ENCODE measurements at regions of chr10 and their contacts with region 1.

Region 1: DNA sequence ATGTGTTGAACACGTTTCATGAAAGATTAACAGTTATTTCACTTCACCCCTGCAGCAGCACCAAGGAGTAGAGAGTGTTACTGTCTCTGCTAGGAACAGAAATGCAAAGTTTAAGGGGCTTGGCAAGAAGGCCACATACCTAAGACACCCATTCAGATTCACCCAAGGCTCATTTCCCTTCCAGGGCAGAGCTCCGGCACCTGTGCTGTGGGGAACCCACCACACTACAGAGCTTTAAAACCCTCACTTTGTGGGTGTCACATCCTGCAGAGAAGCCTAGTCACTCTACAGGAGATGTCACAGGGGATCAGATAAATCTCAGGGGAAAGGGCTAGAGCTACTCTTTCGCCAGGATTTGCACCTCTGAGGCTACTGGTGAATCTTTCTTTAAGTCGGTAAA is 176.1 kb upstream of the KLF6 start:
- DNase-seq: peak; percentile 67
- ATAC-seq: peak; percentile 97
- H3K4me3 Mint-ChIP-seq: peak overlapping the region; percentile 85
- H3K27ac Mint-ChIP-seq: peak overlapping the region; percentile 93
- H3K4me1 Mint-ChIP-seq: peaks cover 57% of the 10 kb centered on the region
- H3K27me3 Mint-ChIP-seq: no peaks in the 10 kb centered on the region

Region 2: DNA sequence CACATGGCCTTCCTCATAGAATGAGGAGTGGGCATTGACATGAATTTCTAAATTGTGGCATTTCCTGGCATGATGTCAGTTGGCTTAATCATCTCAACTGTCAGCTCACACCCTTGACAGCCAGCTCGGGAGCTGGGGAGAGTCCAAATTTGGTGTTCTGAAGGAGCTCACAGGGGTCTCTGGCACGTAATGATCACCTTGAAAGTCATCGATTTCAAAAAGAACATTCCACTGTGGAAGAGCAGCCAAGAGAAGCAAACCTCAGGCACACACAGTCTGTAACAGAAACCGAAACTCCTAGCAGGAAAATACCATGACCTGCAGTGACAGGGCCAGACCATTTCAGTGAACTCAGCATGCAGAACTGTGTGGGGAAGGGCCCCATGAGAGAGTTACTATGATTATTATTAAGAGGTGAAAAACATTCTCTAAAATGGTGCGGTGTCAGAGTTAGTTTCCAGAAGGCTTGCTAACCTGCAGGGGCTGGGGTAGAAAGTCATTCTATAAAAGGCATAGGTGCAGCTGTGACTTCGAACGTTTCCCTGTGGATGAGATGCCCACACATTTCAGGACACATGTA is 149.7 kb before region 1 on chr10:
- POLR2A ChIA-PET with region 1: interaction called, 110 read pairs
- DNase-seq: no peak
- ATAC-seq: peak; percentile 41
- H3K4me3 Mint-ChIP-seq: peak overlapping the region; percentile 81
- H3K27ac Mint-ChIP-seq: peak overlapping the region; percentile 97
- H3K4me1 Mint-ChIP-seq: peaks cover 75% of the 10 kb centered on the region
- H3K27me3 Mint-ChIP-seq: no peaks in the 10 kb centered on the region

Region 3: DNA sequence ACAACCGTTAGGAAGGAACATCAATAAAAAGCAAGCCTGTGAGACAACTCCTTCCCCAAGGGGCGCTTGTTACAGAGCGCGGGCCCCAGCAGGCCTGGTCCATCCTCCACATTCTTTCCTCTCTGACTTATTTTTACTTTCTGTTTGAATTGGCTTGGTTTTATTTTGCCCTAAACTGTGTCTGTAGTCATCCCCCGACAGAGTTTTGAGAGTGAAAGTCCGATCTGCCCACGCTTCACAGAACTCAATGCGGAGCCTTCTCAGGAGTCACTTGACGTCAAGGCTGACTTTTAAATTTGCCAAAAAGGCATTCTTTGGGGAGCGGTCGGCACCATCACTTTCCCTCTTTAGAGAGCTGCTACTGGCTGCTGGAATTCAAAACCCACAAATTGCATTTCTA is 25.9 kb before region 1 on chr10:
- POLR2A ChIA-PET with region 1: interaction called, 12 read pairs
- DNase-seq: no peak
- ATAC-seq: peak; percentile 89
- H3K4me3 Mint-ChIP-seq: peak overlapping the region; percentile 76
- H3K27ac Mint-ChIP-seq: peak overlapping the region; percentile 98
- H3K4me1 Mint-ChIP-seq: peaks cover 50% of the 10 kb centered on the region
- H3K27me3 Mint-ChIP-seq: no peaks in the 10 kb centered on the region

Region 4: DNA sequence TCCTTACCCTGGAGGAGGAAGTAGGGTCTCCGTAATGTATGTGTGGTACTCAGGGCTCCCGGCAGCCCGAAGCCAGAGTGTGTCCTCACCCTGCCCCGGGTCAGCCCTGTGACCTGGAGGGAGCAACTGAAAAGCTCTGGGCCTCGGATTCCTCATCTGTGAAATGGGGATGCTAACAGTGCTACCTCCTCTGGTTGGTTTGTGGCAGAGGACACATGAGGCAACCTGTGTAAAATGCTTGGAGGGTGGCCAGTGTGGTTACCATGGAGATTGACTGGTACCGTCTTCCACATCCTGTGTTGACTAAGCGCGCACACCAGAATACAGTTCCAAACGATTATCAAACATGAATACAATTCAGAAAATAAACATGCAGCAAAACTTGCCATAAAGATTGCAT is 12.2 kb before region 1 on chr10:
- POLR2A ChIA-PET with region 1: interaction called, 164 read pairs
- DNase-seq: peak; percentile 62
- ATAC-seq: peak; percentile 78
- H3K4me3 Mint-ChIP-seq: peak overlapping the region; percentile 79
- H3K27ac Mint-ChIP-seq: peak overlapping the region; percentile 88
- H3K4me1 Mint-ChIP-seq: peaks cover 75% of the 10 kb centered on the region
- H3K27me3 Mint-ChIP-seq: no peaks in the 10 kb centered on the region

Region 5: DNA sequence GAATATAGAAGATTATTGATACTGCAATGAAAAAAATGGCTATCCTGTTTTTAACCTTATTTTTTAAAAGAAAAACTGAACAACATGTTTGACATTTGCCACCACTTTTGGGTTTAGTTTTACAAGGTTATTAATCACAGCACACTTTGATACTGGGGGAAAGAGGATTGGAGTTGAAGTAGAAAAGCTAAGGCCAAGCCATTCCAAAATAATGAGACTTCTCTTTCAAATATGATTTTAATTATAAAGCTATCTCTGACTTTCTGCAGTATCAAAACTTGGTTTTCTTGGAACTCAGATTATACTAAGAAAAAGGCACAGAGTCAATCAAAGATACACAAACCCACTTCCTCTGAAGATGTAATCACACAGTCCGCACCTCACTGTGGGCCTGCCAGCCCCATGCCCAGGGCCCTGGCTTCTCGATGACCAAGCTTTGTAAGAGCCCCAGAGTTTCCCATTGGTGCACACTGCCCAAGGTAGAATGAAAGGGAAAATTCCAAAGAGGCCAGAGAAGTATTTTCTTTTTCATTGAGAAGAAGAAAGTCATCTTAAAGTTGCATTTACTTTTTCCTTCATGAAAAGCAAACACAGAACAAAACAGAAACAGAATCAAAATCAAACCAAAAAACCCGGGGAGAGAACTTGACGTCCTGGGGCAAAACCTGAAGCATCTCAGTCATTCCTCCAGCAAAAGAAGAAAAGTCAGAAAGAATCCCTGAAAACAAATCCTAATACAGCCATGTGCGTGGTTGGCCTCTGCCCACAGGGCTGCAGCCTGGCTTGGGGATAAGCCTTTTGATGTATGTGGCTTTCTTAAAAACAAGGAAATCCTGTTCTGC is 11.6 kb after region 1 on chr10:
- POLR2A ChIA-PET with region 1: interaction called, 114 read pairs
- DNase-seq: no peak
- ATAC-seq: peak; percentile 89
- H3K4me3 Mint-ChIP-seq: peak overlapping the region; percentile 82
- H3K27ac Mint-ChIP-seq: peak overlapping the region; percentile 96
- H3K4me1 Mint-ChIP-seq: peaks cover 51% of the 10 kb centered on the region
- H3K27me3 Mint-ChIP-seq: no peaks in the 10 kb centered on the region

Region 6: GRCh38 chr10:3980660-3981059 is 19.6 kb after region 1 on chr10:
- POLR2A ChIA-PET with region 1: interaction called, 114 read pairs
- DNase-seq: no peak
- ATAC-seq: peak; percentile 44
- H3K4me3 Mint-ChIP-seq: peak overlapping the region; percentile 48
- H3K27ac Mint-ChIP-seq: peak overlapping the region; percentile 89
- H3K4me1 Mint-ChIP-seq: peaks cover 34% of the 10 kb centered on the region
- H3K27me3 Mint-ChIP-seq: no peaks in the 10 kb centered on the region

Region 7: GRCh38 chr10:3995302-3996210 is 34.5 kb after region 1 on chr10:
- POLR2A ChIA-PET with region 1: no interaction called
- DNase-seq: no peak
- ATAC-seq: no peak
- H3K4me3 Mint-ChIP-seq: no peak overlapping the region
- H3K27ac Mint-ChIP-seq: no peak overlapping the region
- H3K4me1 Mint-ChIP-seq: peaks cover 8% of the 10 kb centered on the region
- H3K27me3 Mint-ChIP-seq: no peaks in the 10 kb centered on the region

Region 8: GRCh38 chr10:4131407-4132228 is 170.5 kb after region 1 on chr10:
- POLR2A ChIA-PET with region 1: interaction called, 27 read pairs
- DNase-seq: peak; percentile 36
- ATAC-seq: peak; percentile 73
- H3K4me3 Mint-ChIP-seq: no peak overlapping the region
- H3K27ac Mint-ChIP-seq: no peak overlapping the region
- H3K4me1 Mint-ChIP-seq: peaks cover 44% of the 10 kb centered on the region
- H3K27me3 Mint-ChIP-seq: no peaks in the 10 kb centered on the region